Activated CD8-positive, alpha-beta T cell treated with anti-CD3 and anti-CD28 coated beads for 36 hours (primary cell): ENCODE measurements at regions of chr16 and their contacts with region 1.

Region 1: DNA sequence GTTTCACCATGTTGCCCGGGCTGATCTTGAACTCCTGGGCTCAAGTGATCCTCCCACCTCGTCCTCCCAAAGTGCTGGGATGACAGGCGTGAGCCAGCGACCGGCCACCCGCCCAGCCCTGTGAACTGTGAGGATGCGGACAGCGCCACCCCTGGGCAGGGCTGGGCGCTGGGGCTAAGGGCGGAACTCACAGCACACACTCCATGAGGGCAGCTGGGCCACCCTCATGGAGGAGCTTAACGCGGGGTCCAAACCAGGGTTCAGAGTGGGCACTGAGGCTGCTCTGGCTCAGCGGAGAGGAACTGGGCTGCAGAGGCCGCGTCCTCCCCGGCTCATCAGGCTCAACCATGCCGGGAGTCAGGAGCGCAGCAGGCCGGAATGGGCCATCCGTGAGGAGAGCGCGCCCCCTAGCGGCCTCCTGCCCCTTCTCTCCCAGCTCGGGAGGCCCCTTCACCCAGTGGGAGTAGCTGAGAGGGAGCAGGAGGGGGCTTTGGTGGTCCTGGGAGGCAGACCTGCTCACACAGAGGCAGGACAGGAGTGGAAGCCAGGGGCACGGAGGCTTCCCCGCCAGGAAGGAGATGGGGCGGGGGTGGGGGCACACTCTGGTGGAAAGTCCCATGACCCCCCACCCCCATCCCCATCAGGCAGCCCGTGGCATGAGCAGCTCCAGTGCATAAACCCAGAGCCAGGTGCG is 13.8 kb downstream of the CORO7 start:
- DNase-seq: peak; percentile 77
- ATAC-seq: peak; percentile 82
- H3K4me3 Mint-ChIP-seq: no peak overlapping the region
- H3K27ac Mint-ChIP-seq: no peak overlapping the region
- H3K4me1 Mint-ChIP-seq: no peaks in the 10 kb centered on the region
- H3K27me3 Mint-ChIP-seq: no peaks in the 10 kb centered on the region
- CTCF ChIP-seq: peak; percentile 89

Region 2: GRCh38 chr16:4307215-4308037 is 95.2 kb before region 1 on chr16:
- CTCF ChIA-PET with region 1: interaction called, 23 read pairs
- POLR2A ChIA-PET with region 1: no interaction called
- intact Hi-C with region 1: no loop called
- DNase-seq: peak; percentile 97
- ATAC-seq: peak; percentile 94
- H3K4me3 Mint-ChIP-seq: peak overlapping the region; percentile 84
- H3K27ac Mint-ChIP-seq: peak overlapping the region; percentile 96
- H3K4me1 Mint-ChIP-seq: peaks cover 29% of the 10 kb centered on the region
- H3K27me3 Mint-ChIP-seq: no peaks in the 10 kb centered on the region
- CTCF ChIP-seq: no peak

Region 3: DNA sequence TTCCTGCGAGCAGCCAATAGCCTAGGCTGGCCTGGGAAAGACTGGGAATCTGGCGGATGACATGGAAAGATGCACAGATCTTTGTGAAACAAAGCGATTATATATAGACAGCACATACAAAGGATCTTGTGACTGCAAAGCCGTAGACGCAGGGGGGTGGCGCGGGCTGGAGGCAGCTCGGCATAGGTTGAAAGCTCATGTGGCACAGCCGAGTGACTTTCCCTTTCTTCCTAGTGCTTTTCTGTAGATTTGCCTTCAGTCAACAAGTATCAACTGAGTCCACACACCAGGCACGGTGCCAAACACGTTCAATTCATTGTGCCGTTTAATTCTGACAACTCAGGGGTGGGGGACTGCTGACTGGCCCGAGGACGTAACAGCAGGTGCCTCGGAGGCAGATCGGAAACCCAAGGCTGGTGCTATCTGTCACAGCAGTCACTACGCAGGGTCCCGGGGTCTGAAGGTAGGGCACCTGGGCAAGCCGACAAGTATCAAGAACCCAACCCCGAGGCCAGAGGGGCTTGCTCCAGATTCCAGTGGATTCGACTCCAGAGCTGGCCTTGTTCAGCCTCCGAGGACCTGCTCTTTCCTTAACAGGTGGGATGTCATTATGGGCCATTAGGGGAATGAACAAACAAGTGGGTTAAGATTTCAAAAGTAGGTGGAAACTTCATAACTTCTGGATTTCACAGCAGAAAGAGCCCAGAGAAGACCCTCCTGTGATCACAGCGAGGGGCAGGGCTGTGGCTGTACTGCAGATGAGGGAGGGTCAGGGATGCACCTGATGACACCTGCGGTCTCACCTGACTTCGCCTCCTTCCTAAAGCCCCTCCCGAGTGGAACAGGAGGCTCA is 57.4 kb before region 1 on chr16:
- CTCF ChIA-PET with region 1: interaction called, 10 read pairs
- POLR2A ChIA-PET with region 1: interaction called, 10 read pairs
- intact Hi-C with region 1: no loop called
- DNase-seq: no peak
- ATAC-seq: no peak
- H3K4me3 Mint-ChIP-seq: no peak overlapping the region
- H3K27ac Mint-ChIP-seq: no peak overlapping the region
- H3K4me1 Mint-ChIP-seq: peaks cover 27% of the 10 kb centered on the region
- H3K27me3 Mint-ChIP-seq: no peaks in the 10 kb centered on the region
- CTCF ChIP-seq: no peak

Region 4: DNA sequence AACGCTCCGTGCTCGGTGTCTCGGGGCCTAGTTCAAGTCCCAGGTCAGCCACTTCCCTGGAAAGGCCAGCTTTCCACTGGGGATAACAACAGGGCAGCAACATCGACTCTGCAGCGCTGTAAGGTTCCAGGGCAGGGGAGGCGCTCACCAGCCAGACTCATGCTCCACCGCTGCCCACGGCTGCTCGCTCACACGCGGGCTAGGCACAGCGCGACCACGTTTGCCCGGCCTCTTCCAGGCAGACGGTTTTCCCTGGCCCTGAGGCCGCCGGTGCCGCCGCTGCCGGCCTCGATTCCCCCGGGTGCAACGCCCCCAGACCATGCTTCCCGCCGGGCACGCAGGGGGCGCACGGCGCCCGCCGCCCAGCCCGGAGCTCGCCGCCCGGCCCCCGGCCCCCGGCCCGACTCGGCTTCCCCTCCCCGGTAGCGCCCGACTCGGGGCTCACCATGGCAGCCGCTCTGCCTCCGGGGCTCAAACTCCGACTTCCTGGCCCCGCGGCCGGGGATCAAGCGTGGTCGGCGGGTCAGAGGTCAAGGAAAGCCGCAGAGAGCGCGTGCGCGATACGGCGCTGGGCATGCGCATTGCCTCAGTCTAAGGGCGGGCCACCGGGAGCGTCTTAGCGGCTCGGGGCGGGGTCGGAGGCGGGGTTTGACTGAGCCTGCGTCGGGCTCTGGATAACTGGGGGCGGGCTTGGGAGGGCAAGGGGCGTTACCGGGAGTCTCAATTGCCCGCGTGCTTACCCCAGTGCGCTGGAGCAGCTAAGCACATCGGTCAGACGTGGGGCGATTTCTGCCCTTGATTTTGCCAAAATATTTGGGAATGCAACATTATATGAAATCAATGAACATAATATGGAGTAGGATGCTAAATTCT is 51.6 kb before region 1 on chr16 and contains the start of gene PAM16:
- CTCF ChIA-PET with region 1: interaction called, 20 read pairs
- POLR2A ChIA-PET with region 1: interaction called, 10 read pairs
- intact Hi-C with region 1: no loop called
- DNase-seq: peak; percentile 99
- ATAC-seq: peak; percentile 95
- H3K4me3 Mint-ChIP-seq: peak within 1 kb of the TSS; percentile 96
- H3K27ac Mint-ChIP-seq: peak within 1 kb of the TSS; percentile 95
- H3K4me1 Mint-ChIP-seq: peaks cover 29% of the 10 kb centered on the region
- H3K27me3 Mint-ChIP-seq: no peaks in the 10 kb centered on the region
- CTCF ChIP-seq: no peak
- total RNA-seq, gene PAM16: 65.9 to 70.1 TPM

Region 5: DNA sequence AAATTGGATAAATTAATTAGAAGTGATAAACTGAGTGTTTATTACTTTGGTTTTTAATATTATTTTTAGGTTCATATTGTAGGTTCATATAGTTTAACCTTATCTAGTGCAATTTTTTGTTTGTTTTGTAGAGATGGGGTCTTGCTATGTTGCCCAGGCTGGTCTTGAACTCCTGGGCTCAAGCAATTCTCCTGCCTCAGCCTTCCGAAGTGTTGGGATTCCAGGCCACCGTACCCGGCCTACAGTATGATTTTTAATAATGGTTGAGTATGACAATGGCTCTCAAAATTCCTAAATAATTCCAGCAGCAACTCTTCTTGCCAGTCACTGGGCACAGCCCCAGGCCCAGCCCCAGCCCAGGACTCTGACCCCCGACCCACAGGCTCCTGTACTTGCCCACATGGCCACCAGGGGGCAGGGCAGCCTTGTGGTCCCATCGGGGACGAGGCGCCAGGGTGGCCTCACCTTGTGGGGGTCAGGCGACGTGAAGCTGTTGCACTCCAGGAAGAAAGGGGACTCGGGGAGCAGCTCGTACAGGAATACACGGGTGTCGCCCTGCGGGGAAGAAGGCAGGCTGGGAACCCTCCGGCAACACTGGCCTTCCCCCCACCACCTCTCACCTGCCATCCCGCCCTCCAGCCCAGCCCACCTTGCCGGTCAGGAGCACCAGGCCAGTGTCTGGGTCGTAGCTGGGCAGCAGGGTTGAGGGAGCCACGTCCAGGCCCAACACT is 43.6 kb before region 1 on chr16:
- CTCF ChIA-PET with region 1: interaction called, 20 read pairs
- POLR2A ChIA-PET with region 1: interaction called, 4 read pairs
- intact Hi-C with region 1: no loop called
- DNase-seq: peak; percentile 75
- ATAC-seq: peak; percentile 90
- H3K4me3 Mint-ChIP-seq: no peak overlapping the region
- H3K27ac Mint-ChIP-seq: peak overlapping the region; percentile 64
- H3K4me1 Mint-ChIP-seq: no peaks in the 10 kb centered on the region
- H3K27me3 Mint-ChIP-seq: no peaks in the 10 kb centered on the region
- CTCF ChIP-seq: peak; percentile 89

Region 6: GRCh38 chr16:4371357-4372000 is 31.1 kb before region 1 on chr16 and contains the start of gene VASN:
- CTCF ChIA-PET with region 1: interaction called, 24 read pairs
- POLR2A ChIA-PET with region 1: interaction called, 5 read pairs
- intact Hi-C with region 1: no loop called
- DNase-seq: peak; percentile 70
- ATAC-seq: peak; percentile 94
- H3K4me3 Mint-ChIP-seq: peak within 1 kb of the TSS; percentile 59
- H3K27ac Mint-ChIP-seq: no peak within 1 kb of the TSS
- H3K4me1 Mint-ChIP-seq: peaks cover 7% of the 10 kb centered on the region
- H3K27me3 Mint-ChIP-seq: no peaks in the 10 kb centered on the region
- CTCF ChIP-seq: no peak
- total RNA-seq, gene VASN: not detected

Region 7: GRCh38 chr16:4416200-4417032 is 13.8 kb after region 1 on chr16 and contains the start of gene CORO7:
- CTCF ChIA-PET with region 1: interaction called, 87 read pairs
- POLR2A ChIA-PET with region 1: interaction called, 9 read pairs
- intact Hi-C with region 1: no loop called
- DNase-seq: peak; percentile 97
- ATAC-seq: peak; percentile 77
- H3K4me3 Mint-ChIP-seq: peak within 1 kb of the TSS; percentile 84
- H3K27ac Mint-ChIP-seq: peak within 1 kb of the TSS; percentile 90
- H3K4me1 Mint-ChIP-seq: peaks cover 31% of the 10 kb centered on the region
- H3K27me3 Mint-ChIP-seq: no peaks in the 10 kb centered on the region
- CTCF ChIP-seq: no peak
- total RNA-seq, gene CORO7: 73.3 to 76.6 TPM

Region 8: DNA sequence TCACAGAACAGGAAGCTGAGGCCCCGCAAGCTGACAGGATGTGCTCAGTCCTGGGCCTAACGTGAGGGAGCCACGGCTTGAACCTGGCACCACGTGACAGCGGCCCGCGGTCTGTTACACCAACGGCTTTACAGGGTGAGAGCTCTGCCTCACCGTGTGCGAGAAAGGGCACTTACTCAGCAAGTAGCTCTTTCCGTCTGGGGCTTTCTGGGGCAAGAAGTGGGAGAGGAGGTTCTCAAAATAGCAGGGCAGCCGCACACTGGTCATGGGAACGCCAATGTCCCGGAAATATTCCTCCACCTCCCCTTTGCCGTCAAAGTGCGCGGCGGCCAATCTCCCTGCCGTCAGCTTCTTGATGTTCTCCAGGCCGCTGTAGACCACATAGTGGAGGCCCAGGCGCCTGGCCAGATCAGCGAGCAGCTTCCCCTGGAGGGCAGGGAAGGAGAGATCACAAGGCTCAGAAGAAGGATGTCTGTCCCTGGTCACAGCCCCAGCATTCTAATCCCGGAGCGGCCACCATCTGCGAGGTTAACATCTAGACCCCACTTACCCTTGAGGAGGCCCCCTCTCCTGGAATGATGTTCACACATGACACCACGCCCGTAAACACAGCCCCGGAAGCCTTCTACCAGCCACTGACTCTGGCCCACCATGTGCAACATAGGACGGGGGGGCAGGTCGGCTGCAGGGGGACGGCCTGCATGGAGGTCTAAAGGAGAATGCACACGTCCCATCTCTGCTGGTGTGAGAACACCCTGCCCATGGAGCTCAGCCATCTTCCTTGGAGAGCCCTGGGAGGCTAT is 63.6 kb after region 1 on chr16:
- CTCF ChIA-PET with region 1: no interaction called
- POLR2A ChIA-PET with region 1: no interaction called
- intact Hi-C with region 1: no loop called
- DNase-seq: peak; percentile 83
- ATAC-seq: peak; percentile 94
- H3K4me3 Mint-ChIP-seq: peak overlapping the region; percentile 32
- H3K27ac Mint-ChIP-seq: peak overlapping the region; percentile 89
- H3K4me1 Mint-ChIP-seq: peaks cover 17% of the 10 kb centered on the region
- H3K27me3 Mint-ChIP-seq: no peaks in the 10 kb centered on the region
- CTCF ChIP-seq: no peak

Region 9: DNA sequence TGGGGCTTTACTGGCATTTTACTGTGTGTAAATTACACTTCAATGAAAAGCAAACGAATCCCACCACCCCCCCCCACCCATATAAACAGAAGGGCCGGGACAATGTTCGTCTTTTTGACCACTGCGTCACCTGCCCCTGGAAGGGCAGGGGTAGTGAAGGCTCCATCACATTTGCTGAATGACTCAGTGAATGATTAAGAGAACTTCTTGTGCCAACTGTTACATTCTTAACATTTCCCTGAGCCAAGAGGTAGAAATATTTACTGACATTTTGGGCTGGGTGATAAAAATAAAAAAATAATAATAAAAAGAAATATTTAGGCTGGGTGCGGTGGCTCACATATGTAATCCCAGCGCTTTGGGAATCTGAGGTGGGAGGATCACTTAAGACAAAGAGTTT is 177.7 kb after region 1 on chr16:
- CTCF ChIA-PET with region 1: no interaction called
- POLR2A ChIA-PET with region 1: no interaction called
- intact Hi-C with region 1: no loop called
- DNase-seq: no peak
- ATAC-seq: no peak
- H3K4me3 Mint-ChIP-seq: no peak overlapping the region
- H3K27ac Mint-ChIP-seq: no peak overlapping the region
- H3K4me1 Mint-ChIP-seq: no peaks in the 10 kb centered on the region
- H3K27me3 Mint-ChIP-seq: no peaks in the 10 kb centered on the region
- CTCF ChIP-seq: no peak